ENCODE measurements at regions of chr9 and their contacts with region 1.

Region 1: GRCh38 chr9:35611230-35611797 is 6.3 kb downstream of the TESK1 start:
- DNase-seq: peak; percentile 37 to 68 (median 44)
- H3K4me3 ChIP-seq: no peak overlapping the region
- H3K4me3 Mint-ChIP-seq: peak overlapping the region in 2 of 7 donors; percentile 61 to 67
- H3K27ac ChIP-seq: no peak overlapping the region
- H3K27ac Mint-ChIP-seq: peak overlapping the region; percentile 3 to 84 (median 66)
- H3K4me1 ChIP-seq: peaks cover 11% of the 10 kb centered on the region
- H3K4me1 Mint-ChIP-seq: peaks cover 21 to 26% (median 26%) of the 10 kb centered on the region in 3 donors
- H3K27me3 ChIP-seq: no peaks in the 10 kb centered on the region
- H3K27me3 Mint-ChIP-seq: peaks cover 0 to 1% of the 10 kb centered on the region in 2 donors

Region 2: DNA sequence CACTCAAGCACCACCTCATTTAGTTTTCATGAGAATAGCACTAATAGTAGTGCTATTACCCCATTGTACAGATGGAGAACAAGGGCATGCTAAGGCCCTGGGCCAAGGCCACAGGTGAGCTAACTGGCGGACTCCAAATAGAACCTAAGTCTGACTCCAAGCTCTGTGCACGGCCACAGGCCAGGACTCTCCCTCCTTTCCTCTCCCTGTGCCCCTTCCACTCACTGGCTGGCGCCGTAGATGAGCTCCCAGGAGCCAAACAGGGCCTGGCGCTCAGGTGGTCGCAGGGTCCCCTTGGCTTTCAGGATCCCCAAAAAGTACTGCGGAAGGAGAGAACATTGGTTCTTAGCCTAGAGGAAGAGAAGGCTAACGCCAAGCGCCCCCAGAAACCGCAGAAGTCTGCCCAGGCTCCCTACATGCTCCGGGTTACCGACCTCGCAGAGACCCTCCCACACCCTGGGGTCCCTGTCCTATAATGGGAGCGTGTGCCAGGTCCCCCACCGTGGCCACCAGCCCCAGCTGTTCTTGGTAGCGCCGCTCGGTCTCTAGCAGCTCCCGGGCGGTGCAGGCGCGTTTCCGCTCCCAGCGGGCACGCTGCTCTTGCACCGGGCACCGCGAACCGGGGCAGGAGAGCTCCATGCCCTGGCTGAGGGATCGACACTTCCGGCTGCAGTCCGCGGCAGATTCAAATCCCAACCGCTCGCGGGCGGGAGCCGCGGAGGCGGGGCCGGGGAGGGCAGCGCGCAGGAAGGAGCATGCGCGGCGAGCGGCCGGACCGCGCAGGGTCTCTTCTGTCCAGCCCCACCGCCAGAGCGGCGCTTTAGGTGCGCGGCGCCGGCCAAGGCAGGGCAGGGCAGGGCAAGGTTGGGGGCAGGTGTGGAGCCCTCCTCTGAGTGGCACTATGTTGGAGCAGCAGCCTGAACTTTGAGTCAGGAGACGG is 53.5 kb after region 1 on chr9 and contains the start of gene ARHGEF39:
- CTCF ChIA-PET with region 1: interaction called, 21 read pairs
- POLR2A ChIA-PET with region 1: no interaction called
- DNase-seq: peak; percentile 60 to 79 (median 71)
- H3K4me3 ChIP-seq: peak within 1 kb of the TSS; percentile 84
- H3K4me3 Mint-ChIP-seq: peak within 1 kb of the TSS; percentile 87 to 91 (median 89)
- H3K27ac ChIP-seq: peak within 1 kb of the TSS; percentile 39
- H3K27ac Mint-ChIP-seq: peak within 1 kb of the TSS; percentile 73 to 100 (median 97)
- H3K4me1 ChIP-seq: peaks cover 52% of the 10 kb centered on the region
- H3K4me1 Mint-ChIP-seq: peaks cover 53 to 68% (median 64%) of the 10 kb centered on the region in 3 donors
- H3K27me3 ChIP-seq: no peaks in the 10 kb centered on the region
- H3K27me3 Mint-ChIP-seq: peaks cover 0 to 2% of the 10 kb centered on the region in 2 donors
- total RNA-seq, gene ARHGEF39: 7.7 to 10.7 TPM

Measured in CD8-positive, alpha-beta memory T cell (primary cell).